Mammary epithelial cell (primary cell): ENCODE measurements at regions of chr6 and their contacts with region 1.

Region 1: GRCh38 chr6:31769684-31770371 is 7.3 kb downstream of the VWA7 start:
- DNase-seq: peak; percentile 70
- H3K4me3 ChIP-seq: no peak overlapping the region
- H3K27ac ChIP-seq: no peak overlapping the region
- H3K4me1 ChIP-seq: peaks cover 7% of the 10 kb centered on the region
- H3K27me3 ChIP-seq: no peaks in the 10 kb centered on the region
- CTCF ChIP-seq: peak; percentile 88 to 95

Region 2: GRCh38 chr6:31712296-31712695 is 57.5 kb before region 1 on chr6:
- CTCF ChIA-PET with region 1: no interaction called
- dilution Hi-C with region 1: no loop called
- in situ Hi-C with region 1: no loop called
- intact Hi-C with region 1: loop called (anchors 1 kb)
- DNase-seq: no peak
- H3K4me3 ChIP-seq: no peak overlapping the region
- H3K27ac ChIP-seq: no peak overlapping the region
- H3K4me1 ChIP-seq: peaks cover 11% of the 10 kb centered on the region
- H3K27me3 ChIP-seq: no peaks in the 10 kb centered on the region
- CTCF ChIP-seq: peak; percentile 24 to 59

Region 3: DNA sequence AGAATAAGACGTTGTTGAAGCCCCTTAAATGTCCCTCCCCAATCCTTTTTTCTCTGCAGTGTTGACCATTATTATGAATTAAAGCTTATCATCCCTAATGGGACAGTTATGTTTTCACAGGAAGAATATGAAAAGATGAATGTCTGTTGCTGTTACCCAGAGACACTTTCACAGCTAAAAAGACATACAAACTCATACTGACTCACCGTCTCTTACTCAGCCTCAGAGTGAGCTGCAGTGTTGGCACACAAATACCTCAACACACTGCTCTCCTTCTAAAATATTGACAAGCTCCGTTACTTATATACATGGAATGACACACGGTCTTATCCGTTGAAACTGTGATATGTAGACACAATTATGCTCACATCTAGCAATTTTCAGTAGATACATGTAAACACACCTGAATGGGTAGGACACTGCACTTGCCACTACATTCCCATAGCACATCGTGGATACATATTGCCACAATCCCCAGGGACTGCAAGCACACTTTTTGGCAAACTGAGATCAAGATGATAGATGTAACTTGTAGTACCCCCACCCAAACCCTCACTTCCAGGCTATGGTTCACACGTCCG is 17.0 kb before region 1 on chr6:
- CTCF ChIA-PET with region 1: interaction called, 11 read pairs
- dilution Hi-C with region 1: no loop called
- in situ Hi-C with region 1: no loop called
- intact Hi-C with region 1: no loop called
- DNase-seq: peak; percentile 52
- H3K4me3 ChIP-seq: no peak overlapping the region
- H3K27ac ChIP-seq: no peak overlapping the region
- H3K4me1 ChIP-seq: no peaks in the 10 kb centered on the region
- H3K27me3 ChIP-seq: no peaks in the 10 kb centered on the region
- CTCF ChIP-seq: no peak

Region 4: DNA sequence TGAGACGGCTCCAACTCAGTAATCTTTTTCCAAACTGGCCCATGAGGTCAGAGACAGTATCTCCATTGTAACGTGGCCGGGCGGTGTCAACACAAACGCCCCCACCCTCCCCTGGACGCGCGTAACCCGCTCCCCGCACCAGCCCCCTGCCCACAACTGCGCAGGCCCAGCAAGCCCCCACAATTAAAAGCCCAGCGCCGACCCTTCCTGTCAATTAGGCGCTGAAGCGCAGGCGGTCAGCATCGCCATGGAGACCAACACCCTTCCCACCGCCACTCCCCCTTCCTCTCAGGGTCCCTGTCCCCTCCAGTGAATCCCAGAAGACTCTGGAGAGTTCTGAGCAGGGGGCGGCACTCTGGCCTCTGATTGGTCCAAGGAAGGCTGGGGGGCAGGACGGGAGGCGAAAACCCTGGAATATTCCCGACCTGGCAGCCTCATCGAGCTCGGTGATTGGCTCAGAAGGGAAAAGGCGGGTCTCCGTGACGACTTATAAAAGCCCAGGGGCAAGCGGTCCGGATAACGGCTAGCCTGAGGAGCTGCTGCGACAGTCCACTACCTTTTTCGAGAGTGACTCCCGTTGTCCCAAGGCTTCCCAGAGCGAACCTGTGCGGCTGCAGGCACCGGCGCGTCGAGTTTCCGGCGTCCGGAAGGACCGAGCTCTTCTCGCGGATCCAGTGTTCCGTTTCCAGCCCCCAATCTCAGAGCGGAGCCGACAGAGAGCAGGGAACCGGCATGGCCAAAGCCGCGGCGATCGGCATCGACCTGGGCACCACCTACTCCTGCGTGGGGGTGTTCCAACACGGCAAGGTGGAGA is 45.4 kb after region 1 on chr6 and contains the starts of genes HSPA1A and HSPA1L:
- CTCF ChIA-PET with region 1: no interaction called
- dilution Hi-C with region 1: no loop called
- in situ Hi-C with region 1: no loop called
- intact Hi-C with region 1: loop called (anchors 5 kb)
- DNase-seq: peak; percentile 95
- H3K4me3 ChIP-seq: peak within 1 kb of the TSS; percentile 53 to 85 (median 75)
- H3K27ac ChIP-seq: peak within 1 kb of the TSS; percentile 81
- H3K4me1 ChIP-seq: peaks cover 15% of the 10 kb centered on the region
- H3K27me3 ChIP-seq: no peaks in the 10 kb centered on the region
- CTCF ChIP-seq: no peak
- total RNA-seq, gene HSPA1A: 67.8 to 99.5 TPM
- total RNA-seq, gene HSPA1L: 0.42 to 0.83 TPM